Activated CD8-positive, alpha-beta T cell treated with anti-CD3 and anti-CD28 coated beads, Interleukin-2, amount 10 ng/mL, durations not matched to agents 7 days and 5 days (primary cell): ENCODE measurements at regions of chr6 and their contacts with region 1.

Region 1: GRCh38 chr6:89940225-89941027 is 46.2 kb downstream of the GJA10 start:
- DNase-seq: peak; percentile 84
- ATAC-seq: peak; percentile 87
- H3K4me3 Mint-ChIP-seq: no peak overlapping the region
- H3K27ac Mint-ChIP-seq: peak overlapping the region; percentile 59
- H3K4me1 Mint-ChIP-seq: peaks cover 55% of the 10 kb centered on the region
- H3K27me3 Mint-ChIP-seq: no peaks in the 10 kb centered on the region

Region 2: DNA sequence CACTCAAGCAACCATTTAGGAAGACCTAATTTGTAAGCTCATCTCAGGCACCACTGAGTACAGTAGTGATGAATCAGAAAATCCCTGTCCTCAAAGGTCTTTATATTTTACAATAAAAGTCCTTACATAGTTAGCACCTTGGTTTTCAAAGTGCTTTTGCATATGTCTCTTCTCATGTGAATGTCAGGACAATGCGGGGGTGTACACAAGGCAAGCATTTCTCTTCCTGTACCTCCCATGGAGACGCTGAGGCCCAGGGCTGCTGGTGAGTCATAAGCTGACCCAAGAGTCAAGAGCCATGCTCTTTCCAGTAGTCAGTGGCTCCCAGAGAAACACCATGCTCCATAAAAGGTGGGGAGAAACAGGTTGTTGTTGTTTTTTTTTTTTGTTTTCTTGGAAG is 127.8 kb after region 1 on chr6:
- CTCF ChIA-PET with region 1: interaction called, 28 read pairs
- POLR2A ChIA-PET with region 1: no interaction called
- DNase-seq: no peak
- ATAC-seq: peak; percentile 47
- H3K4me3 Mint-ChIP-seq: no peak overlapping the region
- H3K27ac Mint-ChIP-seq: no peak overlapping the region
- H3K4me1 Mint-ChIP-seq: peaks cover 77% of the 10 kb centered on the region
- H3K27me3 Mint-ChIP-seq: no peaks in the 10 kb centered on the region

Region 3: GRCh38 chr6:90121982-90122381 is 181.6 kb after region 1 on chr6:
- CTCF ChIA-PET with region 1: interaction called, 26 read pairs
- POLR2A ChIA-PET with region 1: no interaction called
- DNase-seq: no peak
- ATAC-seq: no peak
- H3K4me3 Mint-ChIP-seq: no peak overlapping the region
- H3K27ac Mint-ChIP-seq: peak overlapping the region; percentile 70
- H3K4me1 Mint-ChIP-seq: peaks cover 69% of the 10 kb centered on the region
- H3K27me3 Mint-ChIP-seq: no peaks in the 10 kb centered on the region

Region 4: DNA sequence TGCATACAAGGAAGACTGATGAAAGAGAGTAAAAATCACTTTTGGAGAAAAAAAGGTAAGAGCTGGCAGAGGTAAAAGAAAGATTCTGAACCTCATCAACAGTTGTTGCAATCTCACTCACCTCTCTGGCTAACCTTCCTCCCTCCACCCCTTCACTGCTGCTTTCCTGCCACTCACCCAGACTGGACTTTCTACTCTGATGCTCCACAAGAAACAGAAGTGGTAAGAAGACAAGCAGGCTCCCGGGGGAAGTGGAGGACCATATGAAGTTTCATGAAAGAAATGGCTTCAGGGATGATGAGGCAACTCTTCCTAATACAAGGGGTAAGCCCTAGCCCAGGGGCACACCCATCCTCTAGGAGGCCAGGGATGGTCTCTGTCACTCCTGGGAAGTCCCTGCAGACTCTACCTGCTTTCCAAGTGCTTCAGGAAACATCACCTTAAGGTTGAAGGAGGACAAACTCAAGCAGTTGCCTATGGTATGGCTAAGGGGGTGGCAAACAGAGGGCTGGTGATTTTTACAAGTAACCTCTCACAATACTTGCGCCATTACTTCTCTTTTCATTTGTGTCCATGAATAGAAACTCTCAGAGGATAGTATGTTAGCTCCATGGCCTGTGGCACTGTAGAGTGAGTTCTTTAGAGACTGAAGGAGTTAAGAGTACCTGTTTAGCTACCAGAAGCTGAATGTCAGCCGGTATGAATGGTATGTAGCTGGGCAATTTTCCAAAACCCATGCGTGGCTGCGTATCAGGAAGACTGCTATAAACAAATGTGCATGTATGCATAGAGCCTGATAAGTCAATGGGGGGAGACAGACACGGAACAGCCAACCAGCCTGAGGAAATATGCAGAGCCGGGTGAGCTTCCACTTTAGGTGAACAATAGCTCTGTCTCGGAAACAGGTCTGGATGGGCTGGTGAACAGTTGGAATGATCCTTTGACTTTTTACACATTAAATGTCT is 244.2 kb after region 1 on chr6:
- CTCF ChIA-PET with region 1: interaction called, 15 read pairs
- POLR2A ChIA-PET with region 1: no interaction called
- DNase-seq: no peak
- ATAC-seq: peak; percentile 16
- H3K4me3 Mint-ChIP-seq: peak overlapping the region; percentile 61
- H3K27ac Mint-ChIP-seq: peak overlapping the region; percentile 81
- H3K4me1 Mint-ChIP-seq: peaks cover 76% of the 10 kb centered on the region
- H3K27me3 Mint-ChIP-seq: no peaks in the 10 kb centered on the region

Region 5: GRCh38 chr6:90274451-90275030 is 334.1 kb after region 1 on chr6:
- CTCF ChIA-PET with region 1: interaction called, 11 read pairs
- POLR2A ChIA-PET with region 1: no interaction called
- DNase-seq: peak; percentile 94
- ATAC-seq: peak; percentile 87
- H3K4me3 Mint-ChIP-seq: peak overlapping the region; percentile 75
- H3K27ac Mint-ChIP-seq: peak overlapping the region; percentile 94
- H3K4me1 Mint-ChIP-seq: peaks cover 91% of the 10 kb centered on the region
- H3K27me3 Mint-ChIP-seq: no peaks in the 10 kb centered on the region

Region 6: GRCh38 chr6:90393232-90393884 is 452.9 kb after region 1 on chr6:
- CTCF ChIA-PET with region 1: interaction called, 20 read pairs
- POLR2A ChIA-PET with region 1: no interaction called
- DNase-seq: peak; percentile 89
- ATAC-seq: peak; percentile 74
- H3K4me3 Mint-ChIP-seq: no peak overlapping the region
- H3K27ac Mint-ChIP-seq: peak overlapping the region; percentile 64
- H3K4me1 Mint-ChIP-seq: peaks cover 52% of the 10 kb centered on the region
- H3K27me3 Mint-ChIP-seq: no peaks in the 10 kb centered on the region